ENCODE measurements at regions of chr16 and their contacts with region 1.

Region 1: DNA sequence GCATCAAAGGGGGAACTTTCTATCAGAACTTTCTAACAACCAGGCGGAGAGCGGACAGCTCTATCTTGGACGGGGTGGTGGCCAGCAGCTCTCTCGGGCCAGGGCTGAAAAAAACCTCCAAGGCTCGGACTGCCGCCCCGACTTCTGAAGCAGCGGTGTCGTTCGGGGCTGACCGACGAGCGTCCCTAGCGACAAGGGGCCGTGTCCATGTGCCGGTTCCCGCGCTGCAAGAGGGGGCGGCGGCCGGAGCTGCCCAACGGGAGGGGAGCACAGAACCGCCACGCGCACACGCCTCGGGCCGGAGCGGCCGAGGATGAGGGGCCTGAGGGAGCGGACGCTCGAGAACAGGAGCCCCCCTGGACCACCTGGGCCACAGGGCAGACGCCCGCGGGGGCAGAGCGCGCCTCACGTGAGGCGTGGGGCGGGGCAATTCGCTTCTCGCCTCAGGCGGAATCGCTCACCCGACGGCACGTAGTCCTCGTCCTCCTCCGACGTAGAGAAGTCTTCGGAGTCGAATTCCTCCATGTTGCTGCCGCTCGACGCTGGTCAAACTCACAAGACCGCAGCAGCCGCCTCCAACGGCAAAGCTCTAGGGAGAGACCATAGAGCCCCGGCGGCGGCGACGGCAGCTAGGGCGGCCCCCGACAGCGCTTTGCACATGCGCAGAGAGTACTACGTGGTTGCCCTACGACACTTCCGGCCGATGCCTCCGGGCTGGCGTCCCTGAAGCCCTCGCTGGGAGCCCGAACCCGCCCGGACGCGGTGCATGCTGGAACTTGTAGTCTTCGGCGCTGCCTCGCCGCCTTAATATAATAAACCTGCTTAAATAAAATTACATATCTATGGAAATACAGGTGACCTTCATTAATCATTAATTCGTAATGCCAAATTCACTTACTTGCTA is at the start of gene CFDP1:
- DNase-seq: peak; percentile 92 to 98 (median 94)
- ATAC-seq: peak; percentile 79
- H3K4me3 ChIP-seq: peak within 1 kb of the TSS; percentile 83
- H3K4me3 Mint-ChIP-seq: peak within 1 kb of the TSS; percentile 94
- H3K27ac ChIP-seq: peak within 1 kb of the TSS; percentile 96 to 97
- H3K27ac Mint-ChIP-seq: peak within 1 kb of the TSS; percentile 96
- H3K4me1 ChIP-seq: peaks cover 33% of the 10 kb centered on the region
- H3K4me1 Mint-ChIP-seq: peaks cover 28% of the 10 kb centered on the region
- H3K27me3 ChIP-seq: no peaks in the 10 kb centered on the region
- H3K27me3 Mint-ChIP-seq: no peaks in the 10 kb centered on the region
- CTCF ChIP-seq: no peak
- total RNA-seq, gene CFDP1: 23.0 to 25.5 TPM

Region 2: DNA sequence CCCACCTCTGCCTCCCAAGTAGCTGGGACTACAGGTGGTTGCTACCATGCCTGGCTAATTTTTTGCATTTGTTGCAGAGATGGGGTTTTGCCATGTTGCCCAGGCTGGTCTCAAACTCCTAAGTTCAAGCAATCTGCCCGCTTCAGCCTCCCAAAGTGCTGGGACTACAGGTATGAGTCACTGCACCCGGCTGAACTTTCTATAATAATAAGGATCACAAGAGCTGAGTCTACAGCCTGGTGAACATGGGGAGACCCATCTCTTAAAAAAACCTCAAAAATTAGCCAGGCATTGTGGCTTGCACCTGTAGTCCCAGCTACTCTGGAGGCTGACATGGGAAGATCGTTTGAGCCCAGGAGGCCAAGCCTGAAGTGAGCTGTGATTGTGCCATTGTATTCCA is 501.6 kb before region 1 on chr16:
- CTCF ChIA-PET with region 1: no interaction called
- POLR2A ChIA-PET with region 1: no interaction called
- intact Hi-C with region 1: no loop called
- DNase-seq: no peak
- ATAC-seq: no peak
- H3K4me3 ChIP-seq: no peak overlapping the region
- H3K4me3 Mint-ChIP-seq: no peak overlapping the region
- H3K27ac ChIP-seq: no peak overlapping the region
- H3K27ac Mint-ChIP-seq: no peak overlapping the region
- H3K4me1 ChIP-seq: no peaks in the 10 kb centered on the region
- H3K4me1 Mint-ChIP-seq: no peaks in the 10 kb centered on the region
- H3K27me3 ChIP-seq: no peaks in the 10 kb centered on the region
- H3K27me3 Mint-ChIP-seq: no peaks in the 10 kb centered on the region
- CTCF ChIP-seq: no peak

Region 3: GRCh38 chr16:74984535-74985296 is 448.4 kb before region 1 on chr16 and contains the start of gene WDR59:
- CTCF ChIA-PET with region 1: no interaction called
- POLR2A ChIA-PET with region 1: interaction called, 5 read pairs
- intact Hi-C with region 1: loop called in 1 of 2 experiments (anchors 10 kb)
- DNase-seq: peak; percentile 94 to 100 (median 98)
- ATAC-seq: peak; percentile 98
- H3K4me3 ChIP-seq: peak within 1 kb of the TSS; percentile 100
- H3K4me3 Mint-ChIP-seq: peak within 1 kb of the TSS; percentile 96
- H3K27ac ChIP-seq: peak within 1 kb of the TSS; percentile 44 to 61
- H3K27ac Mint-ChIP-seq: peak within 1 kb of the TSS; percentile 84
- H3K4me1 ChIP-seq: peaks cover 23% of the 10 kb centered on the region
- H3K4me1 Mint-ChIP-seq: peaks cover 23% of the 10 kb centered on the region
- H3K27me3 ChIP-seq: no peaks in the 10 kb centered on the region
- H3K27me3 Mint-ChIP-seq: no peaks in the 10 kb centered on the region
- CTCF ChIP-seq: no peak
- total RNA-seq, gene WDR59: 60.2 to 67.2 TPM

Region 4: DNA sequence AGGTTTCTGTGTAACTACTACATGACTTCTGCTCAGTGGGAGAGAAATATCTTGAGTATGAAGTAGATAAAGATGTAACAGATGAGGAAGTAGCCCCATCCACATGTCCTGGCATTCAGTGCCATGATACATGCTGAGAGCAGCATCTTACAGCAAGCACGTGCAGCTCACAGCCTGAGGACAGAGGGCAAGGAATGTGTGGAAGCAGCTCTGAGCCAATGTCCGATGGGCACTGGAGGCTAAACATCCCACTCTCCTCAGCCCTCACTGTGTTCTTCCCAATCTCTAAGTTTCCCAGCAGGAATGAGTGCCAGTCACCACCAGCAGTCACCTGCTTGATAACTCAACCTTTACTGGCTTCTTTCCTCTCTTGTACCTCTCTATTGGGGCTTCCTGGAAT is 40.2 kb before region 1 on chr16:
- CTCF ChIA-PET with region 1: no interaction called
- POLR2A ChIA-PET with region 1: no interaction called
- intact Hi-C with region 1: no loop called
- DNase-seq: no peak
- ATAC-seq: no peak
- H3K4me3 ChIP-seq: no peak overlapping the region
- H3K4me3 Mint-ChIP-seq: no peak overlapping the region
- H3K27ac ChIP-seq: no peak overlapping the region
- H3K27ac Mint-ChIP-seq: no peak overlapping the region
- H3K4me1 ChIP-seq: no peaks in the 10 kb centered on the region
- H3K4me1 Mint-ChIP-seq: peaks cover 7% of the 10 kb centered on the region
- H3K27me3 ChIP-seq: no peaks in the 10 kb centered on the region
- H3K27me3 Mint-ChIP-seq: no peaks in the 10 kb centered on the region
- CTCF ChIP-seq: no peak